Adrenal gland (tissue), 19 donors: ENCODE measurements at regions of chr15 and their contacts with region 1.

Region 1: DNA sequence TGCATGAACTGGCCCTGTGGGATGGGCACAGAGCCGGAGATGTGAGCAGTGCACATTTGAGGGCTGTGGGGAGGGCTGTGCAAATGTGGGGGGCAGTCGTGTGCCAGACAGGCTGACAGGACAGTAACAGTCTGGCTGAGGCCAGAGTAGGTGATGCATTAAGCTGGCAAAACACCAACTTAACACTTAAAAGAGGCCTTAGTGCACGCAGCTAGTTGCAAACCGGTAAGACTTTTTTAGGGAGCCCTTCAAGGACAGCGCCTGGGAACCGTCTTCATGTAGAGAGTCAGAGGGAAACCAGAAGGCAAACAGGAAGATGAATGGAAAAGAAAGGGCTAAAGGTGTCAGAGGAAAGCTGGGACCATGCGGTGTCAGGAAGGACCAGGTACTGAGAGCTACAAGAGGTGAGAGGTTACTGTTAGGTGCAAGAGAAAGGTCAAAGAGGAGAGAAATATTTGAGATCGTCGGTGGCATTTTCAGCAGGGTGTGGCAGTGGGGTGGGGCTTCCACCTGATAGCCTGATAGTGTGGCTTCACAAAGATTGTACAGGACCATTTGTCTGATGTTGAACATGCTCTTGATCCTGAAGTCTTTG is 30.0 kb upstream of the CHD2 start:
- DNase-seq: no peak
- H3K4me3 ChIP-seq: no peak overlapping the region
- H3K27ac ChIP-seq: peak overlapping the region in 1 of 5 donors; percentile 45
- H3K4me1 ChIP-seq: peaks cover 8 to 14% of the 10 kb centered on the region in 2 donors
- H3K27me3 ChIP-seq: no peaks in the 10 kb centered on the region
- CTCF ChIP-seq: no peak
- POLR2A ChIP-seq: no peak

Region 2: DNA sequence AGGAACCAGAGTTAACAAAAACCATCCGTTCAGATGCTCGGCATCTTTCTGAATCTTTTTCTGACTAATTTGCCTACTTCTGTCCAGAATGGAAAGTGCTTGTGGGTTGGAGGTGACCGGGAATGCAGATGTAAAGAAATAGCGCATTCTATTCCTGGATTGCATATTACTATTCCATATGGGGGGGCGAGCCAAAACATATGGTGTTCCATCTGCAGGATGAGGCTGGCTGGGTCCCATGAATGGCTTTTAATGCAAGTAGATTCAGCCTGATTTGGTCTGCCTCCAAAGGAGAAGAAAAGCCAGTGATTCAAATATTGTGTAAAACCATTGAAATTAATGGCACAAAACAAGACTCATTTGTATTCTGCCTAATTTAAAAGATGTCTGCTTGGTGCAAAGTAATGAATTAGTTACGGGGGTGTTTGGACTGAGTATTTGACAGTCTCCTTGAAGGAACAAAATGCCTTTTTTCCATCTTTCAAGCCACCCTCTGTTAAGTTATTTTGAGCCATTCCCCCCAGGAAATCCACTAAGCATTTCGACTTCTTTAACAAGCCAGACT is 377.5 kb before region 1 on chr15:
- intact Hi-C with region 1: no loop called
- DNase-seq: no peak
- H3K4me3 ChIP-seq: no peak overlapping the region
- H3K27ac ChIP-seq: no peak overlapping the region
- H3K4me1 ChIP-seq: no peaks in the 10 kb centered on the region
- H3K27me3 ChIP-seq: peaks cover 3% of the 10 kb centered on the region
- CTCF ChIP-seq: no peak
- POLR2A ChIP-seq: no peak

Region 3: DNA sequence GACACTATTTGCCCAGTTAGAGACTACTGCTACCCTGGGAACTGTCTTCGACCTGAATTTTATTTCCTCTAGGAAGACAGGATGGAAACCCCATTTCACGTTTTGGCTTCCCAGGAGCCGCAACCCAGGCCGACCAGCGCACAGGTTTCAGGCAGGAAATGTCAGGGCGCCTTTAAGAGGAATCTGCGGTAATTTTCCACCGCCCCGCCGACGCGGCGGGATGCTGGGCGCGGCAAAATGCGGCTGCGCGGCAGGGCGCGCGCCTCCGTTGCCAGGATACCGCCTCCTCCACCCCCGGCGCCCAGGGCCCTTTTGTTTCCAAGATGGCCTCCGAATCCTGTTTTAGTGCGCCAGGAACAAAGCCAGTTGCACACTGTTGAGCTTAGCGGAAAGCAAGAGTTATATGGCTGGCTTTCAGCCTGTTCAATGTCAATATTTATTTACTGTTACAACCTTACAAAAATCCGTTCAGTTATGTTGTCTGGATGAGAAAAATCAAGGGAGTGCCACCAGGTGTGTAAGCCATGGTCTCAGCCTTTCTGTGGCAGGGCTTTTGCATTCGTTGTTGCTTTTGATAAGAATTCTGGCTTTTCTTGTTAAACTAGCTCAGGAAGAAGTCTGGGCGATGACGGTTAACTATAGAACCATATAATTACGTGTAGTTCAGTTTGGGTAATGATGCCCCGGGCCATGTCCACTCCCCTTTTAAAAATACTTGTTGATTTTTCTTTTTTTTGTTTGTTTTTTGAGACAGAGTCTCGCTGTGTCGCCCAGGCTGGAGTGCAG is 49.7 kb before region 1 on chr15:
- intact Hi-C with region 1: loop called in 1 of 2 experiments (anchors 10 kb)
- DNase-seq: peak; percentile 89 to 97 (median 92)
- H3K4me3 ChIP-seq: peak overlapping the region in 2 of 4 donors; percentile 14 to 53
- H3K27ac ChIP-seq: peak overlapping the region; percentile 63 to 84 (median 77)
- H3K4me1 ChIP-seq: peaks cover 16 to 30% of the 10 kb centered on the region in 2 donors
- H3K27me3 ChIP-seq: no peaks in the 10 kb centered on the region
- CTCF ChIP-seq: no peak
- POLR2A ChIP-seq: peak; percentile 26 to 78